ENCODE measurements at regions of chr19 and their contacts with region 1.

Region 1: GRCh38 chr19:29610563-29611271 is 4.6 kb downstream of the POP4 start:
- DNase-seq: peak; percentile 67 to 81 (median 73)
- H3K4me3 ChIP-seq: no peak overlapping the region
- H3K4me3 Mint-ChIP-seq: no peak overlapping the region
- H3K27ac ChIP-seq: peak overlapping the region in 1 of 2 donors; percentile 44
- H3K27ac Mint-ChIP-seq: peak overlapping the region in 5 of 7 donors; percentile 53 to 71 (median 68)
- H3K4me1 ChIP-seq: peaks cover 7 to 8% of the 10 kb centered on the region in 2 donors
- H3K4me1 Mint-ChIP-seq: peaks cover 13% of the 10 kb centered on the region
- H3K27me3 ChIP-seq: no peaks in the 10 kb centered on the region
- H3K27me3 Mint-ChIP-seq: peaks cover 0 to 4% (median 0%) of the 10 kb centered on the region in 3 donors
- CTCF ChIP-seq: peak; percentile 85

Region 2: DNA sequence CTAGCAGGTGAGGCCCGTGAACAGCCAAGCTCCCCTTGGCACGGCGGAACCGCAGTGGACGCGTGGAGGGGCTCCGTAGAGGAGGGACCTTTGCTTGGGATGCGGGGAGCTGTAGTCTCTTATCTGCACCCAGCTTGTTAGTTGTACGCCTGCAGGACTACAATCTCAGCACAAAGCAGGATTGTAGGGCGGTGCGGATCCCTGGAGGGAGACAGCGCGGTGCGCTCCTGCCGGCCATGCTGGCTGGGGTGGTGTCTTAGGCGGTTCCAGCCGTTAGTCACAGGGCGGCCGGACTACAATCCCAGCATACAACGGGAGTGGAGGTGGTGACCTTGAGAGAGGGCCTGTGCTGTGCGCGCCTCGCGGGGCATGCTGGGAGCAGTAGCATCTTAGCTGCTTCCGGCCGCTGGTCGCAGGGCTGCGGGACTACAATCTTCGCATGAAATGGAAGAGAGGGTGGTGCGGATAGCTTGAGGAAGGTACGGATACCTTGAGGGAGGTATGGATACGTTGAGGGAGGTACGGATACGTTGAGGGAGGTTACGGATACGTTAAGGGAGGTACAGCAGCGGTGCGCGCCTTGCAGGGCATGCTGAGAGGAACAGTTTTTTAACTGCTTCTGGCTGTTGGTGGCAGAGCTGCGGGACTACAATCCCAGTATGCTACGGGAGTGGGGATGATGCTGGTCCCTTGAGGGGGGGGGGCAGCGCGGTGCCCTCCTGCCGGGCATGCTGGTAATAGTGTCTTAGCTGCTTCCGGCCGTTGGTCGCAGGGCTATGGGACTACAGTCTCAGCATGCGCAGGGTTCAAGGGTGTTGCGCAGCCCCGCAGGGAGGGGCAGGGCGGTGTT is 1816.8 kb before region 1 on chr19:
- intact Hi-C with region 1: loop called in 1 of 2 experiments (anchors 10 kb)
- DNase-seq: peak; percentile 84 to 89 (median 86)
- H3K4me3 ChIP-seq: peak overlapping the region; percentile 70 to 94 (median 71)
- H3K4me3 Mint-ChIP-seq: peak overlapping the region; percentile 94 to 99
- H3K27ac ChIP-seq: peak overlapping the region; percentile 82 to 93
- H3K27ac Mint-ChIP-seq: peak overlapping the region; percentile 88 to 95 (median 92)
- H3K4me1 ChIP-seq: peaks cover 24 to 35% of the 10 kb centered on the region in 2 donors
- H3K4me1 Mint-ChIP-seq: peaks cover 29% of the 10 kb centered on the region
- H3K27me3 ChIP-seq: no peaks in the 10 kb centered on the region
- H3K27me3 Mint-ChIP-seq: peaks cover 0 to 3% (median 0%) of the 10 kb centered on the region in 3 donors
- CTCF ChIP-seq: no peak

Region 3: GRCh38 chr19:29212648-29213573 is 397.8 kb before region 1 on chr19 and contains the start of gene UQCRFS1:
- intact Hi-C with region 1: loop called in 1 of 2 experiments (anchors 5 kb)
- DNase-seq: peak; percentile 88 to 93 (median 92)
- H3K4me3 ChIP-seq: peak within 1 kb of the TSS; percentile 74 to 84 (median 78)
- H3K4me3 Mint-ChIP-seq: peak within 1 kb of the TSS; percentile 86 to 91
- H3K27ac ChIP-seq: peak within 1 kb of the TSS; percentile 83 to 99
- H3K27ac Mint-ChIP-seq: peak within 1 kb of the TSS; percentile 94 to 99 (median 97)
- H3K4me1 ChIP-seq: peaks cover 14 to 27% of the 10 kb centered on the region in 2 donors
- H3K4me1 Mint-ChIP-seq: peaks cover 40% of the 10 kb centered on the region
- H3K27me3 ChIP-seq: no peaks in the 10 kb centered on the region
- H3K27me3 Mint-ChIP-seq: peaks cover 0 to 7% (median 6%) of the 10 kb centered on the region in 3 donors
- CTCF ChIP-seq: no peak
- polyA plus RNA-seq, gene UQCRFS1: 26.2 to 108 (median 108) TPM

Region 4: GRCh38 chr19:29665215-29665825 is 54.6 kb after region 1 on chr19 and contains the start of gene PLEKHF1:
- intact Hi-C with region 1: loop called (anchors 5 kb)
- DNase-seq: peak; percentile 68 to 75 (median 75)
- H3K4me3 ChIP-seq: peak within 1 kb of the TSS; percentile 46 to 79 (median 47)
- H3K4me3 Mint-ChIP-seq: peak within 1 kb of the TSS; percentile 72 to 86
- H3K27ac ChIP-seq: no peak within 1 kb of the TSS
- H3K27ac Mint-ChIP-seq: peak within 1 kb of the TSS in 4 of 7 donors; percentile 11 to 66 (median 20)
- H3K4me1 ChIP-seq: peaks cover 10 to 16% of the 10 kb centered on the region in 2 donors
- H3K4me1 Mint-ChIP-seq: peaks cover 20% of the 10 kb centered on the region
- H3K27me3 ChIP-seq: peaks cover 0 to 11% of the 10 kb centered on the region in 2 donors
- H3K27me3 Mint-ChIP-seq: peaks cover 3 to 24% (median 12%) of the 10 kb centered on the region in 3 donors
- CTCF ChIP-seq: no peak
- polyA plus RNA-seq, gene PLEKHF1: 0.11 to 0.29 (median 0.26) TPM

Region 5: DNA sequence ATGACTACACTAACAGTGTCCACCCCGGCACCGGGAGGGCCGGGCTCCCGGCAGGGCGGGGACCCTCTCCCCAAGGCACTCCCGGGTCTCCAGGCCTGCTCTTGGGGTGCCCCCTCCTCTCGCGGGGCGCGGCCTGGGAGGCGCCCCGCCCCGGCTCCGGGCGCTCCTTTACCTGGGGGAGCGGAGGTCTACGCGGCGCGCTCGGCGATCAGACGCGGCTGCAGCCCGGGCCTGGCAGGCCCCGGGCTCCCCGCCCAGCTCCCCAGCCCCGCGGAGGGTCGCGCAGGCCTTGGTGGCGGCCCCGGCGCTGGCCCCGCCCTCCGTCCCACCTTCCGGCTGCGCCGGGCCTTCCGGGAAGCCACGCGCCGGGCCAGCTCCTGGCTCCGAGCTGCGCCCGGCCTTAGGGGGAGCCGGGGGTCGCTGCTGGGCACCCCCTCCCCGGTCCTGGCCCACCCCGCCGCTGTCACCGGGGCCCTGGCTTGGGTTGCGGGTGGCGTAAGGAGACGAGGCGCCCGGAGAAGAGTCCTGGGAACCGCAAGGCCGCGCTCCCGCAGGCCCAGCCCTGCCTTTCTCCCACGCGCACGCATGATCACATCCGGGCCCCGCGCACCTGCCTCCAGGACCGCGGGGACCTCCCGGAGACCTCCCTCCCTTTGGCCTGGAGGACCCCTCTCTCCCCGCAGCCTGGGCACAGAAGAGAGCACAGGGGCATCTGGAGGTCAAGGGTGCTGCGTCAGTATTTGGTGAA is 104.4 kb after region 1 on chr19 and contains the start of gene C19orf12:
- intact Hi-C with region 1: loop called (anchors 2 to 5 kb)
- DNase-seq: peak in 1 of 3 donors; percentile 32
- H3K4me3 ChIP-seq: peak within 1 kb of the TSS; percentile 81 to 95 (median 87)
- H3K4me3 Mint-ChIP-seq: peak within 1 kb of the TSS; percentile 82 to 93
- H3K27ac ChIP-seq: peak within 1 kb of the TSS; percentile 65 to 93
- H3K27ac Mint-ChIP-seq: peak within 1 kb of the TSS; percentile 82 to 93 (median 91)
- H3K4me1 ChIP-seq: peaks cover 16 to 22% of the 10 kb centered on the region in 2 donors
- H3K4me1 Mint-ChIP-seq: peaks cover 37% of the 10 kb centered on the region
- H3K27me3 ChIP-seq: no peaks in the 10 kb centered on the region
- H3K27me3 Mint-ChIP-seq: peaks cover 0 to 3% (median 2%) of the 10 kb centered on the region in 3 donors
- CTCF ChIP-seq: no peak
- polyA plus RNA-seq, gene C19orf12: 6.0 to 8.0 (median 6.8) TPM

Region 6: GRCh38 chr19:29844891-29845572 is 234.3 kb after region 1 on chr19:
- intact Hi-C with region 1: loop called (anchors 5 to 10 kb)
- DNase-seq: peak; percentile 75 to 82 (median 81)
- H3K4me3 ChIP-seq: peak overlapping the region; percentile 90 to 98 (median 95)
- H3K4me3 Mint-ChIP-seq: peak overlapping the region; percentile 91 to 95
- H3K27ac ChIP-seq: peak overlapping the region; percentile 17 to 62
- H3K27ac Mint-ChIP-seq: peak overlapping the region; percentile 78 to 93 (median 86)
- H3K4me1 ChIP-seq: peaks cover 28 to 31% of the 10 kb centered on the region in 2 donors
- H3K4me1 Mint-ChIP-seq: peaks cover 26% of the 10 kb centered on the region
- H3K27me3 ChIP-seq: no peaks in the 10 kb centered on the region
- H3K27me3 Mint-ChIP-seq: peaks cover 12 to 18% (median 12%) of the 10 kb centered on the region in 3 donors
- CTCF ChIP-seq: no peak

Region 7: GRCh38 chr19:29941828-29942403 is 331.2 kb after region 1 on chr19 and contains the start of gene URI1:
- intact Hi-C with region 1: loop called (anchors 10 kb)
- DNase-seq: peak; percentile 67 to 79 (median 74)
- H3K4me3 ChIP-seq: peak within 1 kb of the TSS; percentile 82 to 85 (median 82)
- H3K4me3 Mint-ChIP-seq: peak within 1 kb of the TSS; percentile 82 to 93
- H3K27ac ChIP-seq: peak within 1 kb of the TSS in 1 of 2 donors; percentile 69
- H3K27ac Mint-ChIP-seq: peak within 1 kb of the TSS in 6 of 7 donors; percentile 73 to 92 (median 84)
- H3K4me1 ChIP-seq: peaks cover 13 to 21% of the 10 kb centered on the region in 2 donors
- H3K4me1 Mint-ChIP-seq: peaks cover 33% of the 10 kb centered on the region
- H3K27me3 ChIP-seq: no peaks in the 10 kb centered on the region
- H3K27me3 Mint-ChIP-seq: peaks cover 0 to 8% (median 8%) of the 10 kb centered on the region in 3 donors
- CTCF ChIP-seq: no peak
- polyA plus RNA-seq, gene URI1: 5.3 to 19.3 (median 9.7) TPM